CD4-positive, alpha-beta T cell (primary cell): ENCODE measurements at regions of chr11 and their contacts with region 1.

Region 1: DNA sequence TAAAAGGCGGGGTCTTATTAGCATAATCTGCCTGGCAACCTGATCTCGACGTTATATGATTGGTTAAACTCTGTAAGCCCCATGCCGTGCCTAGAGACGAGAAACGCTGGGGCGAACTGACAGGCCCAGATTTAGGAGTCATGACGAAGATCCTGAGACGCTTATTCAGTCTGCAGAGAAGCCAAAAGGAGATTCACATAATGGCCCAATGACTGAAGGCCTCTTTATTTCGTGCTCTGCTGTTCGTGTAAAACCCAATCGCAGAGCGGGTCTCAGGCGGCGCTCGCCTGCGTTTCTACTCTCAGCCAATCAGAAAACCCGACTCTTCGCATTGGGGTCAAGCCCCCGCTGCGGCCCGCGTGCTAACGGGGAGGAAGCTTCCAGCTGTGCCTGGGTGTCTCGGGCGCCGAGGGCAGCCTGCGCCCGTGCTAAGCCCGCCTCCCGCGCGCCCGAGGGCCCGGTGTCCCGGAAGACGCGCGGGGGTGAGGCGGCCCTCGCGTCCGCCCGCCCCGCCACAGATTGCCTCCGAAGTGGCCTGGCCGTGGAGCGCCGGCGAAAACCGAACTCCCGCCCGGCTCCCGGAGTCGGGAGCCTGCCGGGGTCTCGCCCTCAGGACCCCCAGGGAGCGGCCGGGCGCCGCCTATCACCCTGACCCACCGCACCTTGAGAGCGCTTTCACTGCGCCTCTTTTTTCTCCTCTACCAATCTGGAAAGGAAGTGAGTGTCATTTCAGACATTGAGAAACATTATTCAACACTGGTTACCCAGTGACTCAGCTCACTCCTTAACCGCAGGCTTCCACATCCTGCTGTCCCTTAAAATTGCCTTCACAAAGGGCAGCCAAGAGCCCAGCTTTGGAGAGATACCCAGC is 446 bp upstream of the PRDM10 start:
- DNase-seq: peak; percentile 81 to 97 (median 88)
- ATAC-seq: peak; percentile 78
- H3K4me3 ChIP-seq: peak overlapping the region; percentile 76
- H3K4me3 Mint-ChIP-seq: peak overlapping the region; percentile 100
- H3K27ac ChIP-seq: peak overlapping the region; percentile 98 to 100
- H3K27ac Mint-ChIP-seq: peak overlapping the region; percentile 100
- H3K4me1 ChIP-seq: peaks cover 23% of the 10 kb centered on the region
- H3K4me1 Mint-ChIP-seq: peaks cover 44% of the 10 kb centered on the region
- H3K27me3 ChIP-seq: no peaks in the 10 kb centered on the region
- H3K27me3 Mint-ChIP-seq: no peaks in the 10 kb centered on the region
- CTCF ChIP-seq: no peak

Region 2: GRCh38 chr11:129279326-129280026 is 723.6 kb before region 1 on chr11:
- CTCF ChIA-PET with region 1: no interaction called
- POLR2A ChIA-PET with region 1: no interaction called
- intact Hi-C with region 1: loop called in 1 of 2 experiments (anchors 10 kb)
- DNase-seq: peak; percentile 50 to 89 (median 72)
- ATAC-seq: peak; percentile 80
- H3K4me3 ChIP-seq: peak overlapping the region; percentile 65
- H3K4me3 Mint-ChIP-seq: peak overlapping the region; percentile 88
- H3K27ac ChIP-seq: no peak overlapping the region
- H3K27ac Mint-ChIP-seq: peak overlapping the region; percentile 66
- H3K4me1 ChIP-seq: peaks cover 16% of the 10 kb centered on the region
- H3K4me1 Mint-ChIP-seq: peaks cover 41% of the 10 kb centered on the region
- H3K27me3 ChIP-seq: peaks cover 11 to 12% of the 10 kb centered on the region in 2 experiments
- H3K27me3 Mint-ChIP-seq: peaks cover 18% of the 10 kb centered on the region
- CTCF ChIP-seq: no peak

Region 3: DNA sequence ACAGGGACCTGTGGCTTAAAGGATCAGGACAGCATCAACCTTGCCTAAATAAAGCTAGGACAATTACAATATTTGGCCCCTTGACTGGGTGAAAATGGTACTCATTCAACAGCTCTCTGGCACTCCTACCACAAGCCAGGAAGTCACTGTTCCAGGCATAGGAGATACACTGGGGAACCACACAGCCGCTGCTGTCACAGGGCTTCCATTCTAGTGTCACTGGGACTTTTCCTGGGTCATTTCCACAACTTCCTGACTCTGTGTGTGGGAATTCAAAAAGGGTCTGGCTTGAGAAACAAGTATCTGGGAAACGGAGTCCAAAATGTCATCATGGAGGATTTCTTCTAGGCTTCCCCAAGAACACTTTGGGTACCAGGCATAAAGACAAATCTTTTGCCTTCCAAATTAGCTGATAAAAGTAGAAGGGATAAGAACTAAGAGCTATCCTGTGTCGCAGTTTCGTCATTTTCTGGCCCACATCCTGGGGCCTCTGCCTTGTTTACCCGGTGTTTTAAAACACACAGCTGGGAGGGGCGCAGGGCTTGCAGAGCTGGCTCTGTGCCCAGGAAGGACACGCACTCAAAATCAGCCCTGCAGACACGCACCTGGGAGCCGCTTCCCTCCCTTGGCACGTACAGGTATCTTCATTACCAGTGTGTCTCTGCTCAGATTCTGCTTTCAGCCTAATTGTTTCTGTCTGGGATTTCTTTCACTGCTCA is 149.4 kb before region 1 on chr11:
- CTCF ChIA-PET with region 1: no interaction called
- POLR2A ChIA-PET with region 1: interaction called, 35 read pairs
- intact Hi-C with region 1: loop called in 1 of 2 experiments (anchors 1 kb)
- DNase-seq: peak; percentile 72 to 92 (median 86)
- ATAC-seq: peak; percentile 93
- H3K4me3 ChIP-seq: peak overlapping the region; percentile 7
- H3K4me3 Mint-ChIP-seq: peak overlapping the region; percentile 73
- H3K27ac ChIP-seq: peak overlapping the region; percentile 65 to 66
- H3K27ac Mint-ChIP-seq: peak overlapping the region; percentile 97
- H3K4me1 ChIP-seq: peaks cover 29% of the 10 kb centered on the region
- H3K4me1 Mint-ChIP-seq: peaks cover 53% of the 10 kb centered on the region
- H3K27me3 ChIP-seq: no peaks in the 10 kb centered on the region
- H3K27me3 Mint-ChIP-seq: no peaks in the 10 kb centered on the region
- CTCF ChIP-seq: no peak

Region 4: DNA sequence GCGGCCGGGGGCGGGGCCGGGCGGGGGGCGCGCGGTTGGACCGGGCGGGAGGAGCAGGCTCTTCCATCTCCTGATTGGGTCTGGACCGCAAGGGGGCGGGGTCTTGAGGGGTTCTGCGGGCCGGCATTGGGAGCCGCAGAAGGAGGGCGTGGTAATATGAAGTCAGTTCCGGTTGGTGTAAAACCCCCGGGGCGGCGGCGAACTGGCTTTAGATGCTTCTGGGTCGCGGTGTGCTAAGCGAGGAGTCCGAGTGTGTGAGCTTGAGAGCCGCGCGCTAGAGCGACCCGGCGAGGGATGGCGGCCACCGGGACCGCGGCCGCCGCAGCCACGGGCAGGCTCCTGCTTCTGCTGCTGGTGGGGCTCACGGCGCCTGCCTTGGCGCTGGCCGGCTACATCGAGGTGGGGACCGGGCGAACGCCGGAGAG is 66.6 kb after region 1 on chr11 and contains the start of gene APLP2:
- CTCF ChIA-PET with region 1: interaction called, 5 read pairs
- POLR2A ChIA-PET with region 1: interaction called, 83 read pairs
- intact Hi-C with region 1: loop called (anchors 1 kb)
- DNase-seq: peak; percentile 92 to 99 (median 97)
- ATAC-seq: peak; percentile 92
- H3K4me3 ChIP-seq: peak within 1 kb of the TSS; percentile 64
- H3K4me3 Mint-ChIP-seq: peak within 1 kb of the TSS; percentile 99
- H3K27ac ChIP-seq: peak within 1 kb of the TSS; percentile 58 to 78
- H3K27ac Mint-ChIP-seq: peak within 1 kb of the TSS; percentile 92
- H3K4me1 ChIP-seq: peaks cover 20% of the 10 kb centered on the region
- H3K4me1 Mint-ChIP-seq: peaks cover 27% of the 10 kb centered on the region
- H3K27me3 ChIP-seq: no peaks in the 10 kb centered on the region
- H3K27me3 Mint-ChIP-seq: peaks cover 4% of the 10 kb centered on the region
- CTCF ChIP-seq: no peak
- total RNA-seq, gene APLP2: 28.8 to 29.5 TPM